PC-9 (cell line): ENCODE measurements at regions of chr12 and their contacts with region 1.

Region 1: GRCh38 chr12:50084775-50085614 is at the start of gene SMARCD1:
- DNase-seq: peak; percentile 78 to 82
- H3K4me3 ChIP-seq: peak within 1 kb of the TSS; percentile 99
- H3K27ac ChIP-seq: peak within 1 kb of the TSS; percentile 69
- H3K4me1 ChIP-seq: peaks cover 32% of the 10 kb centered on the region
- H3K27me3 ChIP-seq: no peaks in the 10 kb centered on the region
- CTCF ChIP-seq: peak; percentile 51; the same call in 1 of the 2 replicates
- total RNA-seq, gene SMARCD1: 48.8 and 66.7 TPM in 2 replicates

Region 2: DNA sequence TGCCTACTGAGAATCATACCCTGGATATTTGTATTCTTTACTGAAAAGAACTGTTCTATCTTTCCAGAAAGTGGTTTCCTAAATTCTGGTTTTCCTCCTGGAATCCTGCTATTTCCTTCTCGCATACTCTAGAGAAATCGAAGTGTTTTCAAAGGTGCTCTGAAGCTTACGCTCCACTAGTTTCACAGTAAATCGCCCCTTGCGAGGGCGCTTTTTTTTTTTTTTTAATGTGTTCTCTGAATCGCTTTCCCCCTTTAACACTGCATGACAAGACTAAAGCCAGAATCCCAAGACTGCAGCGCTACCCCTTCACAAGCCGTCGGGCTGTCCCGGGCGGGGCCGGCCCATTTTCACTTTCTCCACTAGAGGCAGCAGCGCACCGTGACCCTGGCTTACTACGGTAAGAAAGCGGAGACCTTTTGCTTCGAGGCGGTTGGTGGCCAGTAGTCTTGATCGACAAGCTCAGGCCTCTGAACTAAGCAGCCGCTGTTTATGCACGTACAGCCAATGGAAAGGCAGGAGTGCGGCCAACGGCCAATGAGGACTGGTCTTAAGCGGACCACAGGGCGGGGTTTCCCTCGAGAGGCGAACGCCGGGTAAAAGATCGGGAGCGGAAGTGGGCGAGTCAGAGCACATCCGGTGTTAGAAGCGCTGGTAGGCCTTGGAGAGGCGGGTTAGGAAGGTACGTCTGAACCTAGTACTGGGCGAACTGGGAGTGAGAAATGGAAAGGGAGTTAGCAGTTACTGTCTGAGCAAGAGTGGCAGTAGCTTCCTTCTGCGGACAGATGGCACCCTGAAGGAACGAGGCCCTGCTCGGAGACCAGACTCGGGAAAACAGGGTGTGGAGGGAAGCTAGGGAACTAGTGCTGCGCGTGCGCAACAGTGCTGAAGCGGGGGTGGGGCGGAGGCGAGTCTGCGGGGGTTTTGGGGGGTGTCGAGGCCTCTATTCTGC is 343.8 kb before region 1 on chr12 and contains the start of gene TMBIM6:
- CTCF ChIA-PET with region 1: no interaction called
- POLR2A ChIA-PET with region 1: interaction called, 11 read pairs
- intact Hi-C with region 1: no loop called
- DNase-seq: peak; percentile 98 to 99
- H3K4me3 ChIP-seq: peak within 1 kb of the TSS; percentile 96
- H3K27ac ChIP-seq: peak within 1 kb of the TSS; percentile 87
- H3K4me1 ChIP-seq: peaks cover 20% of the 10 kb centered on the region
- H3K27me3 ChIP-seq: no peaks in the 10 kb centered on the region
- CTCF ChIP-seq: peak; percentile 92
- total RNA-seq, gene TMBIM6: 685 and 690 TPM in 2 replicates

Region 3: GRCh38 chr12:49866859-49867579 is 218.0 kb before region 1 on chr12:
- CTCF ChIA-PET with region 1: no interaction called
- POLR2A ChIA-PET with region 1: interaction called, 11 read pairs
- intact Hi-C with region 1: no loop called
- DNase-seq: peak; percentile 67 to 82
- H3K4me3 ChIP-seq: no peak overlapping the region
- H3K27ac ChIP-seq: peak overlapping the region; percentile 57; the same call in 1 of the 2 replicates
- H3K4me1 ChIP-seq: peaks cover 30% of the 10 kb centered on the region
- H3K27me3 ChIP-seq: no peaks in the 10 kb centered on the region
- CTCF ChIP-seq: peak; percentile 98

Region 4: DNA sequence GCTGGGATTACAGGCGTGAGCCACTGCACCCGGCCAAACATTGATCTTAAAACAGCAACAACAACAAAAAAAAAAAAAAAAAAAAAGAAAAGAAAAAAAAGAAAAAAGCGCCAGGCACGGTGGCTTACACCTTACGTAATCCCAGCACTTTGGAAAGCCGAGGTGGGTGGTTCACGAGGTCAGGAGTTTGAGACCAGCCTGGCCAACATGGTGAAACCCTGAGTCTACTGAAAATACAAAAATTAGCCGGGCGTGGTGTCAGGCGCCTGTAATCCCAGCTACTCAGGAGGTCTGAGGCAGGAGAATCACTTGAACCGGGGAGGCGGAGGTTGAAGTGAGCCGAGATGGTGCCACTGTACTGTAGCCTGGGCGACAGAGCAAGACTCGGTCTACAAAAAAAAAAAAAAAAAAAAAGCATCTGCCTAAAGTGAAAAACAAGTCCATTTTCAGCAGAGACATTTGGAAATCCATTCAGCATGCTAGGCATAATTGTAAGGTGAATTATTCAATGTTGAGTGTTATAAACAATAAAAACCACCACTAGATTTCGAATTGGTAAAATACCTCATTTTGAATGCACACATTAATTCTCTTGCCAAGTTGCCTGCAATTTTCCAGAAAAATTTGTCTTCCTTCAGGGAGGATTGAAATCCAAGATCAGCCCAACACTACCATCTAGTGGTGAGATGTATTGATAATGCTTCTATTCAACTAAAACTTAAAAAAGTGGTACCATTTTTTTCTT is 90.1 kb after region 1 on chr12:
- CTCF ChIA-PET with region 1: interaction called, 4 read pairs
- POLR2A ChIA-PET with region 1: interaction called, 19 read pairs
- intact Hi-C with region 1: loop called (anchors 1 kb)
- DNase-seq: peak in 1 of 2 experiments; percentile 51
- H3K4me3 ChIP-seq: no peak overlapping the region
- H3K27ac ChIP-seq: no peak overlapping the region
- H3K4me1 ChIP-seq: no peaks in the 10 kb centered on the region
- H3K27me3 ChIP-seq: no peaks in the 10 kb centered on the region
- CTCF ChIP-seq: peak; percentile 78

Region 5: DNA sequence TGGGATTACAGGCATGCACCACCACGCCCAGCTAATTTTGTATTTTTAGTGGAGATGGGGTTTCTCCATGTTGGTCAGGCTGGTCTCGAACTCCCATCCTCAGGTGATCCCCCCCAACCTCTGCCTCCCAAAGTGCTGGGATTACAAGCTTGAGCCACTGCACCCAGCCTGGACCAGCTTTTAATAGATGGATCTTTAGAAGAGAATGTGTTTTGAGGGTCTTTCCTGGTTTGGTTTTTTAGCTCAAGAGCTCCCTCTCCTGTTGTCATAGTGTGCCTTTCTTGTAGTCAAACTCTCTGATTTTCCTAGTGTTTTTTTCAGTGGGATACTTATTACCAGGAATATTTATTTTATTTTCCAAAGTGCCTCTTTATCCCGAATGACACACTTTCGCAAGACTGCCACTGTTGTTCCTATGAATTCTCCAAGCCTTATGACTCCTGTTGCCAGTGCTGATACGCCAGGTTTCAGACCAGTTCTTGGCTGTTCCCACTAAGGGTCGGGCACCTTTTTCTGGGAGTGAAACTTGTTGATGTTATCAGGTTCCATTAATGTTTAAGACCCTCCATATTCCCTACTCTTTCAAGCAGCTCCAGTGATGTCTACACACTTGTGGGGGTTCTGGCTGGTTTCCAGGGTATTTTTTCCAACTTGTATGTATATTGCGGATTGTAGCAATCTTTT is 229.8 kb after region 1 on chr12:
- CTCF ChIA-PET with region 1: interaction called, 12 read pairs
- POLR2A ChIA-PET with region 1: no interaction called
- intact Hi-C with region 1: loop called (anchors 1 kb)
- DNase-seq: peak in 1 of 2 experiments; percentile 17
- H3K4me3 ChIP-seq: no peak overlapping the region
- H3K27ac ChIP-seq: no peak overlapping the region
- H3K4me1 ChIP-seq: peaks cover 11% of the 10 kb centered on the region
- H3K27me3 ChIP-seq: no peaks in the 10 kb centered on the region
- CTCF ChIP-seq: peak; percentile 87

Region 6: GRCh38 chr12:50425589-50426258 is 340.7 kb after region 1 on chr12:
- CTCF ChIA-PET with region 1: no interaction called
- POLR2A ChIA-PET with region 1: interaction called, 35 read pairs
- intact Hi-C with region 1: no loop called
- DNase-seq: no peak
- H3K4me3 ChIP-seq: no peak overlapping the region
- H3K27ac ChIP-seq: no peak overlapping the region
- H3K4me1 ChIP-seq: no peaks in the 10 kb centered on the region
- H3K27me3 ChIP-seq: no peaks in the 10 kb centered on the region
- CTCF ChIP-seq: no peak